ENCODE measurements at regions of chr4 and their contacts with region 1.

Region 1: DNA sequence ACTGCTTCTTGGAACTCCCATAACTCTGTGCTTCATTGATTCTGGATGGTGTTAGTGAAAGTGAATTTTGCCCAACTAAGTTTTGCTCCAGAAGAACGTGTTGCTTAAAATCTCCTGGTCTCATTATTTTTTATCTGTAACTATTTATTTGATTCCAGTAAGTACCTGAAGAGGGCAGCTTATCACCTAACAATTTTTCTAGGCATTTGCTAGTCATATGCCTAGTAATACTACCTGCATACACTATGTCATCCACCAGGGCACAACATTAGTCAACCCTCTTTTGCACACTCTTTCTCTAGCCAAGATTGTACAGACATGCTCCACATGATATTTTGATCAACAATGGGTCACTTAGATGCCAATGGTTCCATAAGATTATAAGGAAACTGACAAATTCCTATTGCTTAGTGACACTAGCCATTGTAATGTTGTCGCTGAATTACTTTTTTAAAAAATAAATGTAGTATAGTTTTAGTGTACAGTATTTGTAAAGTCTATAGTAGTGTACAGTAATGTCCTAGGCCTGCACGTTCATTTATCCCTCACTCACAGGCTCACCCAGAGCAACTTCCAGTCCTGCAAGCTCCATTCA is 499.9 kb upstream of the AADAT start:
- DNase-seq: no peak
- H3K4me3 ChIP-seq: no peak overlapping the region
- CTCF ChIP-seq: peak; percentile 7

Region 2: DNA sequence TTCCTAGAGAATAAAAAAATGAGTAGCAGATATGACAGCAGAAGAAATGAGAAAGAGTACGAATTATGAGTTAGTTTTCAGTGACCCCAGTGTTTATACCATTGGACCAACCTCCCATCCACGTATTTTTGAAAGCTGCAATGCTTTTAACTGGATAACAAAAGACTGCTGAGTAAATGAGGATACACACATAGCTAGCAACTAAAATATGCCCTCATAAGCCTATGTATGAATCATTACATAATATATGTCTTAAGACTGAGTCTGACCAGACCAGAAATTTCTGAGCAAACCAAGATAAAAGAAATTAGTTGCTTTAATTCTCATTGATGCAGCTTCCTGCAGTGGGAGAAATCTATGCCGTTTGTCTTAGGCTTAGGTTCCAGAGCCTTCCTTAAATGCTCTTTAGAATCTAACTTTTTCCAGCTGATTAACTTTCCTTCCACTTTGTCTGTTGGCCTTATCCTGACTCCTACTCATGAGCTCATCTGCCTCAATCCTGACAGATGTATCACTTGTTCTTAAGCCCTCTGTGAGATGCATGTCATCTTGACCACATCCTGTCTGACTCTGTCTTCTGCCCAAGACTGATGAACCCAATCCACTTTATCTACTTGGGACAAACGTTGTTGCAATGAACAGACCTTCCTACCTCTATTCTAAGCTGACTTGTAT is 198.5 kb before region 1 on chr4:
- CTCF ChIA-PET with region 1: no interaction called
- POLR2A ChIA-PET with region 1: no interaction called
- DNase-seq: peak; percentile 93
- H3K4me3 ChIP-seq: no peak overlapping the region
- CTCF ChIP-seq: no peak

Region 3: DNA sequence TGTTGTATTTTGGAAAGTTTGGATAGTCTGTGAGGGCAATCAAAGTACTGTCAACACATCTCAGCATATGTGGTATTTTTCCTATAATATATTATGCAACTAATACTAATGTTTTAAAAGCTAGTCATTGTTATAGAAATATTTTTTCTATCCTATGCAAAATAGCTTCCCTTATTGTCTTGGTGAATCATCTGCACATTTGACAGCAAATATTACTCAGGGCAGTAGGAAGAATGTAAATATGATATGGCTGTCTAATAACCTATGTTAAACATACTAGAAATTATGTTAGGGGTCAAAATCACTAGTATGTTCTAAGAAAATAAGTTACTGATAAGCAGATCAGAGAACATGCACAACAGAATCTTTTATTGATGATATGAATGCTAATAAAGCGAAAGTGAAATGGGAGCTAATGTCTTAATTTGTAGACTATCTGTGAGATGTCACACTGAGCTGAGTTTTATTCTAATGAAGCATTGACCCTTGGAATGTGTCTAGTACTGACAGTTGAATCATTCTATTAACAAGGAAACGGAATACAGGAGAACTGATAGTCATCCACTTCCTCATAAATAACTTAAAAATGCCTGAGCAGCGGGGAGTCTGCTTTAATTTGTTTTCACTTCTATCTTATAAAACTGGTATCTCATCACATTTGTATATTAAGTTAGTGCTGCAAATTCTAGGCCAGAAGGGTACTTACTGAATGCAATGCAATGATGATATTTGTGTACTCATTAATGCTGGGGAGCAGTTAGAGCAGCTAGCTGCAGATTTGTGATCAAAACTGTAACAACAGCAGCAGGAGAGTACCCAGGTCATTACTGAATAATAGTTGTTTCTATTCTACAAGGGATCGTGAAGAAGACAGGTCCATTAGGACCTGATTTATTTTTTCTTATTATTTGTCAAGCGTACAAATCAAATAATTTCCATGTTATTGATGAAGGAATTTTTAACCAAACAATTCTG is 59.7 kb before region 1 on chr4:
- CTCF ChIA-PET with region 1: no interaction called
- POLR2A ChIA-PET with region 1: no interaction called
- DNase-seq: no peak
- H3K4me3 ChIP-seq: no peak overlapping the region
- CTCF ChIP-seq: no peak

Region 4: DNA sequence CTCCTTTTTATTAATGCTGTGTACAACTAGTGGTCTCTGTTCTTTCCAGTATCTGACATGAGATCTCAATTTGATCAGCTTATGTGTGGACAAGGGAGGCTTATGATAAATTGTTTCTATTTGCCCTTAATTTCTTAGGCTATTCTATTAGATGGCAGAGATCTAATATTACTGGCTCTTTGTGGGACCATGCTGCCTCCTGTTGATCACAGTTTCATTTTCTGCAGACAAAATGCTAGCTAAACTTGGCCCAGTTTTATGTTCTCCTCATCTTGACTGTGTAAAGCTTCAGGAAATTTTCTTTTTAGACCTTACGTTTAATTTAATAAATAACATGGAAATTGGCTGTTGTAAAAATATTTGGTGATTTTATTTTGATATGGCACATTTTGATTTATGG is 127.2 kb after region 1 on chr4:
- CTCF ChIA-PET with region 1: interaction called, 15 read pairs
- POLR2A ChIA-PET with region 1: no interaction called
- DNase-seq: no peak
- H3K4me3 ChIP-seq: no peak overlapping the region
- CTCF ChIP-seq: no peak

Region 5: DNA sequence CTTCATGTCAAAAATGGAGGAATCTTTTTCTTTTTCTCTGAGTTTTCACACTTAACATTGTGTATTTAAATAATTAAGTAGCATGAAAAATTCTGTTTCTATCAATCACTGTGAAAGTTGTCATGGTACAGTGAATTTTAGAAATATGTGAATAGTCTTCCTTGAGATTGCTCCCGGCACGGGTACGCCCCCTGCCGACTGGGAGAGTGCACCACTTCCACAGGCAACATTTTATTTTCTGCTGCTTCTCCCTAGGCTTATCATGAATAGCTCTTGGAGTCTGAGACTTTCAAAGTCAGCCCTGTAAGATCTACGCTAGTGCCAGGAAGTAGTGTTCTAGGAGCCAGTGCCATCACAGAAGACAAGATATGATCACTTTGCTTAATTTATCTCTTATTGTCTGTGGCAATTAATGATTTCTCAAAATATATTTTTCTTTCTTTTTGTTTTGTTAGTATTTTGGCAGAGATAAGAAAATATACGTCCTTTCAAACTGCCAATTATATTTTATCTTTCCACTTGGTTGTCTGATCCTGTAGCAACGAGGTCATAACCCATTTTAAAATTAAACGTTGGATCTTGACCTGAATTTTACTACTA is 263.8 kb after region 1 on chr4:
- CTCF ChIA-PET with region 1: interaction called, 14 read pairs
- POLR2A ChIA-PET with region 1: no interaction called
- DNase-seq: no peak
- H3K4me3 ChIP-seq: no peak overlapping the region
- CTCF ChIP-seq: peak; percentile 78

Measured in AG04449 (cell line).